Heart left ventricle (tissue), 16 donors: ENCODE measurements at regions of chr1 and their contacts with region 1.

Region 1: GRCh38 chr1:81314513-81315233 is 486.1 kb upstream of the ADGRL2 start:
- DNase-seq: no peak
- ATAC-seq: peak; percentile 49 to 62 (median 57)
- H3K4me3 ChIP-seq: no peak overlapping the region
- H3K27ac ChIP-seq: peak overlapping the region in 9 of 12 donors; percentile 0 to 77 (median 36)
- H3K4me1 ChIP-seq: peaks cover 0 to 28% (median 11%) of the 10 kb centered on the region in 12 donors
- H3K27me3 ChIP-seq: no peaks in the 10 kb centered on the region
- CTCF ChIP-seq: no peak
- POLR2A ChIP-seq: no peak

Region 2: DNA sequence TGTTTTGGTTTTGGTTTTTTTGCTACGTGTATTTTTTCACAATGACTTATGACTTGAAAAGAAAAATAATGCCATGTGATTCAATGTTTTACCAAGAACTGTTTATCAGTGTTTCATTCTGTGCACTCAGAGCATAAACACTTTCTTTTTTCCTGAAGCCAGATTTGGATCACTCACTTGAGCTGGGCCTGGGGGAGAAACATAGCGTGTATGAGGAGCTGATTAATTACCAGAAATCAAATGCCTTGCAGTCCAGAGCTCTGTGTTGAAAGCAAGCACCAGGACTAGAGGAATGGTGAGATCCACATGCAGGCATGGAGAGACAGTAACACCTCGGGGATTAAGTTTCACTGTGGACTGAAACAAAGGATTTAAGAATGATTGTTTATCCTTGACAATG is 156.1 kb before region 1 on chr1:
- intact Hi-C with region 1: no loop called
- DNase-seq: no peak
- ATAC-seq: no peak
- H3K4me3 ChIP-seq: no peak overlapping the region
- H3K27ac ChIP-seq: no peak overlapping the region
- H3K4me1 ChIP-seq: no peaks in the 10 kb centered on the region
- H3K27me3 ChIP-seq: no peaks in the 10 kb centered on the region
- CTCF ChIP-seq: no peak
- POLR2A ChIP-seq: no peak

Region 3: GRCh38 chr1:81225789-81226602 is 88.7 kb before region 1 on chr1:
- intact Hi-C with region 1: loop called in 2 of 10 experiments (anchors 5 to 10 kb)
- DNase-seq: no peak
- ATAC-seq: peak in 1 of 4 donors; percentile 56
- H3K4me3 ChIP-seq: no peak overlapping the region
- H3K27ac ChIP-seq: peak overlapping the region in 2 of 12 donors; percentile 14 to 20
- H3K4me1 ChIP-seq: peaks cover 0 to 15% (median 0%) of the 10 kb centered on the region in 12 donors
- H3K27me3 ChIP-seq: no peaks in the 10 kb centered on the region
- CTCF ChIP-seq: no peak
- POLR2A ChIP-seq: no peak

Region 4: DNA sequence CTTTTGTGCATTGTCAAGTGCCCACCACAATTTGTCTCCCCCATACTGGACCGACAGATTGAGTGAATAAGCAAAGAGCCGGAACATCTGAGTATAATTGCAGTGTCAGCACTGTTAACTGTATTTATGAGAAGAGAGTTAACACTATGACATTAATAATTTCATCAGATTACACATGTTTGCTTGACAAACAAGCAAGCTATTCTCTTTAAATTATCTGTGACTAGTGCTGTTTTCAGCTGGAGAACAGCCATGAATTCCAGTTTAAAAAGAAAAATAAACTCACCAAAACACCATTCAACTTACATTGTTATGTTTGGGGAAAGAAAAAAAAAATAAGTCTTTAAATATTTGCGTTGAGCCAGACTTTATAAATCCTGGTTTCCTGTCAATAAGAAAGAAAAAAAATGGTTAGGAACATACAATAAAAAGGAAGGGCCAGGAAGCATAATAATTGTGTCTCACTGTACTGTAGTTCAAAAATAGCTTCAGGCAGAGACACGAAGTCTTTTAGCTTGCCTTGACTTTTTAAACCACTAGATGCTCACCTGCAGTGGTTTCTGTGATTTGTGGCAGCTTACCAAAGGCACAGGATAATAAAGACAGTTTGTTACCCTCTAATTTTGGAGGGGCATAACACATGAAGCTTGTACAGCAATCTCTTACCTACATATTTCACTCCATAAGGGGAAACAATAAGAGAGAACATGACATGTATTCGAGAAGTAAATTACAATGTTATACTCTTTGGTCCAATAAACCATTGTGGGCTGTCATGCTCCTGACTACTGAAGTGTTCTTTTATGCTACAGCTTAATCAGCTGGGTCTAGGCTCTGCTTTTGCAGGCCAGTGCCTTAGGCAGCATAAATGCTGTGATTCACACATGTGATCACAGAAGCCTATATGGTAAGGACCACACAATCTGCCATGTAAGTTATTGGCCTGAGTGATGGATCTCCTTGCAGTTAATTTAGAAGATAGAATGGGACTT is 184.1 kb after region 1 on chr1:
- intact Hi-C with region 1: loop called in 2 of 10 experiments (anchors 5 to 10 kb)
- DNase-seq: no peak
- ATAC-seq: peak; percentile 34 to 68 (median 51)
- H3K4me3 ChIP-seq: no peak overlapping the region
- H3K27ac ChIP-seq: peak overlapping the region in 9 of 12 donors; percentile 1 to 50 (median 28)
- H3K4me1 ChIP-seq: peaks cover 0 to 24% (median 13%) of the 10 kb centered on the region in 12 donors
- H3K27me3 ChIP-seq: no peaks in the 10 kb centered on the region
- CTCF ChIP-seq: peak in 1 of 12 donors; percentile 10
- POLR2A ChIP-seq: no peak

Region 5: GRCh38 chr1:81574408-81574807 is 259.7 kb after region 1 on chr1:
- intact Hi-C with region 1: loop called in 1 of 10 experiments (anchors 10 kb)
- DNase-seq: no peak
- ATAC-seq: peak; percentile 32 to 72 (median 53)
- H3K4me3 ChIP-seq: peak overlapping the region in 4 of 12 donors; percentile 5 to 28 (median 16)
- H3K27ac ChIP-seq: no peak overlapping the region
- H3K4me1 ChIP-seq: peaks cover 0 to 31% (median 14%) of the 10 kb centered on the region in 12 donors
- H3K27me3 ChIP-seq: no peaks in the 10 kb centered on the region
- CTCF ChIP-seq: no peak
- POLR2A ChIP-seq: no peak

Region 6: DNA sequence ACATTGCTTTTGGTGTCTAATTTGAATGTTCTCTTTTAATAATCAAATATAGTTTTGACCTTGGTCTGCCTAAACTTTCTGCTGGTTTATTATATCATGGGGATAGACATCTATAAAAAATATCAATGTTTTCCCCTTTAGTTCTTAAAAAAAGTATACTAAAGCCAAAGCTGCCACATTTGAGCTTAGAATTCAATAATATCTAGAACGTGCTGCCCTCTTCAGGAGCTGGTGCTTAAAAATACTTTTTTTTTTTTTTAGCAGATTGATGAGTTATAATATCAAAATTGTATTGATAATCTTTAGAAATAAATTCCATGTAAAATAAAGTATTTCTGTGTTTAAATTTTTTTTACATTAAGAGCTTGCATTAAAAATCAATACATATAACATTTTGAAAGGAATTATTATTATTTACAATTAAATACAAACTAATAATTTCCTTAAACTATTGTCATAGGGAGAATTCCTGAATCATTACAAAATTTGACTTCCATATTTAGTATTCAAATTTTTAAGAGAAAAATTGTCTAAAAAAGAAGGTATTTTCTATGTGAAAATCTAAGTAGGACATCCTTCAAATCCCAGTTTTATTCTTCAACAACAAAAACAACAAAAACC is 445.9 kb after region 1 on chr1:
- intact Hi-C with region 1: loop called in 4 of 10 experiments (anchors 5 kb)
- DNase-seq: no peak
- ATAC-seq: no peak
- H3K4me3 ChIP-seq: no peak overlapping the region
- H3K27ac ChIP-seq: no peak overlapping the region
- H3K4me1 ChIP-seq: peaks cover 0 to 15% (median 3%) of the 10 kb centered on the region in 12 donors
- H3K27me3 ChIP-seq: no peaks in the 10 kb centered on the region
- CTCF ChIP-seq: peak in 10 of 12 donors; percentile 17 to 63 (median 54)
- POLR2A ChIP-seq: no peak